ENCODE measurements at regions of chr4 and their contacts with region 1.

Region 1: DNA sequence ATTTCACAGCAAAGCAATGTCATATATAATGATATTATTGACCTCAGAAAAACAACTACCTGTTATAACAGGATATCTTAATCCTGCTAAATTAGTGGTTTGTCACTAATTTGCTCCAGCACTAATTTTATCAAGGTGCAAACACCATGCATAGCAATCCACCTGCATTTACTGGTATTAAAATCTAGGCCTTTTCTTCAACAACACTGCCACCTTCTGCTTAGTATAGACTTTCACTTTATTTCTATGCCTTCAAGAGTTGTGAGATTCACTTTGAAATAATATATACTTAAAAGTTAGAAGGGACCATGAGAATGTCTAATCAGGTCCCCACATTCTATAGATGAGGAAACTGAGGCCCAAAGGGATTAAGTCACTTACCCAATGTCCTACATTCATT is 82.1 kb upstream of the IQCM start:
- DNase-seq: peak in 1 of 2 experiments; percentile 4
- H3K4me3 ChIP-seq: no peak overlapping the region
- H3K4me3 Mint-ChIP-seq: no peak overlapping the region
- H3K27ac Mint-ChIP-seq: no peak overlapping the region
- H3K4me1 ChIP-seq: no peaks in the 10 kb centered on the region
- H3K4me1 Mint-ChIP-seq: no peaks in the 10 kb centered on the region
- H3K27me3 ChIP-seq: no peaks in the 10 kb centered on the region
- H3K27me3 Mint-ChIP-seq: peaks cover under 1% of the 10 kb centered on the region
- CTCF ChIP-seq: peak; percentile 35 to 49

Region 2: GRCh38 chr4:148589182-148589581 is 1308.6 kb before region 1 on chr4:
- CTCF ChIA-PET with region 1: no interaction called
- POLR2A ChIA-PET with region 1: no interaction called
- intact Hi-C with region 1: no loop called
- DNase-seq: no peak
- H3K4me3 ChIP-seq: no peak overlapping the region
- H3K4me3 Mint-ChIP-seq: no peak overlapping the region
- H3K27ac Mint-ChIP-seq: no peak overlapping the region
- H3K4me1 ChIP-seq: no peaks in the 10 kb centered on the region
- H3K4me1 Mint-ChIP-seq: no peaks in the 10 kb centered on the region
- H3K27me3 ChIP-seq: no peaks in the 10 kb centered on the region
- H3K27me3 Mint-ChIP-seq: no peaks in the 10 kb centered on the region
- CTCF ChIP-seq: no peak

Region 3: GRCh38 chr4:148998719-148999118 is 899.1 kb before region 1 on chr4:
- CTCF ChIA-PET with region 1: no interaction called
- POLR2A ChIA-PET with region 1: no interaction called
- intact Hi-C with region 1: loop called (anchors 5 kb)
- DNase-seq: peak in 1 of 2 experiments; percentile 17
- H3K4me3 ChIP-seq: no peak overlapping the region
- H3K4me3 Mint-ChIP-seq: no peak overlapping the region
- H3K27ac Mint-ChIP-seq: no peak overlapping the region
- H3K4me1 ChIP-seq: no peaks in the 10 kb centered on the region
- H3K4me1 Mint-ChIP-seq: no peaks in the 10 kb centered on the region
- H3K27me3 ChIP-seq: no peaks in the 10 kb centered on the region
- H3K27me3 Mint-ChIP-seq: peaks cover 6% of the 10 kb centered on the region
- CTCF ChIP-seq: peak; percentile 21 to 26

Region 4: GRCh38 chr4:149264093-149264733 is 633.6 kb before region 1 on chr4:
- CTCF ChIA-PET with region 1: no interaction called
- POLR2A ChIA-PET with region 1: no interaction called
- intact Hi-C with region 1: loop called (anchors 1 kb)
- DNase-seq: peak; percentile 49 to 50
- H3K4me3 ChIP-seq: no peak overlapping the region
- H3K4me3 Mint-ChIP-seq: no peak overlapping the region
- H3K27ac Mint-ChIP-seq: no peak overlapping the region
- H3K4me1 ChIP-seq: no peaks in the 10 kb centered on the region
- H3K4me1 Mint-ChIP-seq: no peaks in the 10 kb centered on the region
- H3K27me3 ChIP-seq: no peaks in the 10 kb centered on the region
- H3K27me3 Mint-ChIP-seq: no peaks in the 10 kb centered on the region
- CTCF ChIP-seq: peak; percentile 67 to 68

Region 5: GRCh38 chr4:149370785-149371420 is 526.9 kb before region 1 on chr4:
- CTCF ChIA-PET with region 1: no interaction called
- POLR2A ChIA-PET with region 1: no interaction called
- intact Hi-C with region 1: loop called (anchors 1 kb)
- DNase-seq: peak; percentile 31 to 38
- H3K4me3 ChIP-seq: no peak overlapping the region
- H3K4me3 Mint-ChIP-seq: no peak overlapping the region
- H3K27ac Mint-ChIP-seq: no peak overlapping the region
- H3K4me1 ChIP-seq: no peaks in the 10 kb centered on the region
- H3K4me1 Mint-ChIP-seq: no peaks in the 10 kb centered on the region
- H3K27me3 ChIP-seq: no peaks in the 10 kb centered on the region
- H3K27me3 Mint-ChIP-seq: no peaks in the 10 kb centered on the region
- CTCF ChIP-seq: peak; percentile 19 to 44

Region 6: GRCh38 chr4:149549911-149550310 is 347.9 kb before region 1 on chr4:
- CTCF ChIA-PET with region 1: no interaction called
- POLR2A ChIA-PET with region 1: no interaction called
- intact Hi-C with region 1: loop called (anchors 5 kb)
- DNase-seq: peak; percentile 17 to 31
- H3K4me3 ChIP-seq: no peak overlapping the region
- H3K4me3 Mint-ChIP-seq: no peak overlapping the region
- H3K27ac Mint-ChIP-seq: no peak overlapping the region
- H3K4me1 ChIP-seq: no peaks in the 10 kb centered on the region
- H3K4me1 Mint-ChIP-seq: no peaks in the 10 kb centered on the region
- H3K27me3 ChIP-seq: no peaks in the 10 kb centered on the region
- H3K27me3 Mint-ChIP-seq: peaks cover 4% of the 10 kb centered on the region
- CTCF ChIP-seq: peak in 1 of 2 experiments; percentile 24

Region 7: DNA sequence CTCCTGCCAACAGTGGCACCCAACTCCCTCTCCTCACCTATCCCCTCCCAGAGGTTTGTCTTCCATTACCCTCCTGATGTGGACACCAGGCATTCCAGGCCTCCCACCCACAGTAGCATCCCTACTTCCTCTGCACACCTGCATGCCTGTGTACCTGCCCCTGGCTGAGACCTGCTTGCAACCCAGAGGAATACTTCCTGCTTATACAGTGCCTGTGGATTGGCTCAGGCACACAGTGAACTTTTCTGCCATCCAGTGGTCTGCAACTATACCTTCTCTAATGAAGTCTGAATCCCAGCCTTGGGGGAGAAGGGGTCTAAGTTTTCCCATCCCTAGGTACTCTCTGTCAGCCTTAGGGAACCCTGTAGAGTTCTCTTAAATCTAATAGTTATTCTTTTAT is 252.0 kb before region 1 on chr4:
- CTCF ChIA-PET with region 1: no interaction called
- POLR2A ChIA-PET with region 1: no interaction called
- intact Hi-C with region 1: loop called (anchors 10 kb)
- DNase-seq: peak in 1 of 2 experiments; percentile 7
- H3K4me3 ChIP-seq: no peak overlapping the region
- H3K4me3 Mint-ChIP-seq: no peak overlapping the region
- H3K27ac Mint-ChIP-seq: no peak overlapping the region
- H3K4me1 ChIP-seq: no peaks in the 10 kb centered on the region
- H3K4me1 Mint-ChIP-seq: no peaks in the 10 kb centered on the region
- H3K27me3 ChIP-seq: no peaks in the 10 kb centered on the region
- H3K27me3 Mint-ChIP-seq: peaks cover 3% of the 10 kb centered on the region
- CTCF ChIP-seq: peak in 1 of 2 experiments; percentile 23

Measured in Caco-2 (cell line).